PC-9 (cell line): ENCODE measurements at regions of chr12 and their contacts with region 1.

Region 1: GRCh38 chr12:68279227-68280054 is 26.0 kb upstream of the IL22 start:
- DNase-seq: no peak
- H3K4me3 ChIP-seq: no peak overlapping the region
- H3K27ac ChIP-seq: no peak overlapping the region
- H3K4me1 ChIP-seq: peaks cover 19% of the 10 kb centered on the region
- H3K27me3 ChIP-seq: no peaks in the 10 kb centered on the region
- CTCF ChIP-seq: no peak

Region 2: DNA sequence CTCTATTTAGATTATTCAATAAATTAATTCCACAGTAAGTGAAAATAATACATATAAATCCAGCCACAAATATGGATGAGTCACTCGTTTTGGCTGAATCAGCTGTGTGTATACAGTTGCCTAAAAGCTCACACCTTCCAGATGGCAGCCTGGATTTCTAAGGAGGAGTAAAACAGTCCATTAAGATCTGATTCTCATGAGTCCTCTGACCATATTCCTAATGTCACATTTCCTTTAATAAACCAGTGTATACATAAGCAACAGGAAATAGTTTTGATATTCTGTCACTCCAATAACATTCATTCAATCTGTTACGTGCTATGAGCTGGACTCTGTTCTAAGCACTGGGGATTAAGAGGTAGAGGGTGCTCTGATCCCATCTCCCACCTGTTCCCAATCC is 30.9 kb after region 1 on chr12:
- CTCF ChIA-PET with region 1: interaction called, 10 read pairs
- POLR2A ChIA-PET with region 1: no interaction called
- intact Hi-C with region 1: no loop called
- DNase-seq: peak in 1 of 2 experiments; percentile 65
- H3K4me3 ChIP-seq: no peak overlapping the region
- H3K27ac ChIP-seq: no peak overlapping the region
- H3K4me1 ChIP-seq: no peaks in the 10 kb centered on the region
- H3K27me3 ChIP-seq: no peaks in the 10 kb centered on the region
- CTCF ChIP-seq: no peak